Calu3 (cell line): ENCODE measurements at regions of chr12 and their contacts with region 1.

Region 1: GRCh38 chr12:116257215-116257614 is 20.3 kb downstream of the MED13L start:
- DNase-seq: no peak
- H3K4me3 Mint-ChIP-seq: no peak overlapping the region
- H3K27ac Mint-ChIP-seq: no peak overlapping the region
- H3K4me1 Mint-ChIP-seq: peaks cover 19% of the 10 kb centered on the region
- H3K27me3 Mint-ChIP-seq: no peaks in the 10 kb centered on the region
- CTCF ChIP-seq: no peak

Region 2: GRCh38 chr12:116133149-116133548 is 124.1 kb before region 1 on chr12:
- CTCF ChIA-PET with region 1: interaction called, 14 read pairs
- intact Hi-C with region 1: no loop called
- DNase-seq: no peak
- H3K4me3 Mint-ChIP-seq: no peak overlapping the region
- H3K27ac Mint-ChIP-seq: no peak overlapping the region
- H3K4me1 Mint-ChIP-seq: peaks cover 18% of the 10 kb centered on the region
- H3K27me3 Mint-ChIP-seq: no peaks in the 10 kb centered on the region
- CTCF ChIP-seq: no peak